Heart left ventricle (tissue), 16 donors: ENCODE measurements at regions of chr13 and their contacts with region 1.

Region 1: DNA sequence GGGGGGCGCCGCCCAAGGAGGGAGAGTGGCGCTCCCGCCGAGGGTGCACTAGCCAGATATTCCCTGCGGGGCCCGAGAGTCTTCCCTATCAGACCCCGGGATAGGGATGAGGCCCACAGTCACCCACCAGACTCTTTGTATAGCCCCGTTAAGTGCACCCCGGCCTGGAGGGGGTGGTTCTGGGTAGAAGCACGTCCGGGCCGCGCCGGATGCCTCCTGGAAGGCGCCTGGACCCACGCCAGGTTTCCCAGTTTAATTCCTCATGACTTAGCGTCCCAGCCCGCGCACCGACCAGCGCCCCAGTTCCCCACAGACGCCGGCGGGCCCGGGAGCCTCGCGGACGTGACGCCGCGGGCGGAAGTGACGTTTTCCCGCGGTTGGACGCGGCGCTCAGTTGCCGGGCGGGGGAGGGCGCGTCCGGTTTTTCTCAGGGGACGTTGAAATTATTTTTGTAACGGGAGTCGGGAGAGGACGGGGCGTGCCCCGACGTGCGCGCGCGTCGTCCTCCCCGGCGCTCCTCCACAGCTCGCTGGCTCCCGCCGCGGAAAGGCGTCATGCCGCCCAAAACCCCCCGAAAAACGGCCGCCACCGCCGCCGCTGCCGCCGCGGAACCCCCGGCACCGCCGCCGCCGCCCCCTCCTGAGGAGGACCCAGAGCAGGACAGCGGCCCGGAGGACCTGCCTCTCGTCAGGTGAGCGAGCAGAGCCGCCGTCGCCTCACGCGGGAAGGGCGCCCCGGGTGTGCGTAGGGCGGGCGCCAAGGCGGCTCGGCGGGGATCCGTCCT is at the start of gene RB1:
- DNase-seq: peak; percentile 94 to 96 (median 96)
- ATAC-seq: peak; percentile 90 to 97 (median 96)
- H3K4me3 ChIP-seq: peak within 1 kb of the TSS; percentile 76 to 99 (median 94)
- H3K27ac ChIP-seq: peak within 1 kb of the TSS; percentile 97 to 100 (median 100)
- H3K4me1 ChIP-seq: peaks cover 0 to 37% (median 27%) of the 10 kb centered on the region in 12 donors
- H3K27me3 ChIP-seq: no peaks in the 10 kb centered on the region
- CTCF ChIP-seq: no peak
- POLR2A ChIP-seq: peak; percentile 78 to 96
- total RNA-seq, gene RB1: 22.4 to 52.1 (median 28.4) TPM

Region 2: GRCh38 chr13:48094781-48095502 is 208.6 kb before region 1 on chr13 and contains the start of gene MED4:
- intact Hi-C with region 1: loop called in 2 of 10 experiments (anchors 1 to 5 kb)
- DNase-seq: peak; percentile 95 to 98 (median 96)
- ATAC-seq: peak; percentile 94 to 99 (median 98)
- H3K4me3 ChIP-seq: peak within 1 kb of the TSS; percentile 65 to 99 (median 90)
- H3K27ac ChIP-seq: peak within 1 kb of the TSS; percentile 78 to 95 (median 88)
- H3K4me1 ChIP-seq: peaks cover 0 to 47% (median 34%) of the 10 kb centered on the region in 12 donors
- H3K27me3 ChIP-seq: no peaks in the 10 kb centered on the region
- CTCF ChIP-seq: peak; percentile 98 to 100 (median 99)
- POLR2A ChIP-seq: peak in 1 of 2 donors; percentile 77
- total RNA-seq, gene MED4: 24.9 to 50.3 (median 46.0) TPM

Region 3: GRCh38 chr13:48126944-48127830 is 176.4 kb before region 1 on chr13:
- intact Hi-C with region 1: loop called in 7 of 10 experiments (anchors 1 to 10 kb)
- DNase-seq: peak; percentile 53 to 78 (median 76)
- ATAC-seq: peak; percentile 56 to 82 (median 74)
- H3K4me3 ChIP-seq: peak overlapping the region in 1 of 12 donors; percentile 6
- H3K27ac ChIP-seq: peak overlapping the region; percentile 75 to 96 (median 90)
- H3K4me1 ChIP-seq: peaks cover 0 to 51% (median 40%) of the 10 kb centered on the region in 12 donors
- H3K27me3 ChIP-seq: no peaks in the 10 kb centered on the region
- CTCF ChIP-seq: peak; percentile 60 to 86 (median 75)
- POLR2A ChIP-seq: no peak

Region 4: DNA sequence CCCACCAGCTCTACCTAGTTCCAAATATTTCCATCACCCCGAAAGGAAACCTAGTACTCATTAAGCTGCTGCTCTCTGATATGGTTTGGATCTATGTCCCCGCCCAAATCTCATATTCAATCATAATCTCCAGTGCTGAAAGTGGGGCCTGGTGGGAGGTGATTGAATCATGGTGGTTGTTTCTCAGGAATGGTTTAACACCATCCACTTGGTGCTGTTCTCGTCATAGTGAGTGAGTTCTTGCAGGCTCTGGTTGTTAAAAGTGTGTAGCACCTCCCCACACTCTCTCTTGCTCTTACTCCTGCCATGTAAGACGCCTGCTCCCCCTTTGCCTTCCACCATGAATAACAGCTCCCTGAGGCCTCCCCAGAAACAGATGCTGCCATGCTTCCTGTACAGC is 165.3 kb before region 1 on chr13:
- intact Hi-C with region 1: no loop called
- DNase-seq: no peak
- ATAC-seq: no peak
- H3K4me3 ChIP-seq: no peak overlapping the region
- H3K27ac ChIP-seq: no peak overlapping the region
- H3K4me1 ChIP-seq: peaks cover 0 to 12% (median 0%) of the 10 kb centered on the region in 12 donors
- H3K27me3 ChIP-seq: no peaks in the 10 kb centered on the region
- CTCF ChIP-seq: no peak
- POLR2A ChIP-seq: no peak

Region 5: GRCh38 chr13:48244159-48244558 is 59.4 kb before region 1 on chr13:
- intact Hi-C with region 1: loop called in 4 of 10 experiments (anchors 5 kb)
- DNase-seq: no peak
- ATAC-seq: peak in 3 of 4 donors; percentile 25 to 38 (median 31)
- H3K4me3 ChIP-seq: no peak overlapping the region
- H3K27ac ChIP-seq: peak overlapping the region in 1 of 12 donors; percentile 5
- H3K4me1 ChIP-seq: peaks cover 0 to 96% (median 69%) of the 10 kb centered on the region in 12 donors
- H3K27me3 ChIP-seq: no peaks in the 10 kb centered on the region
- CTCF ChIP-seq: no peak
- POLR2A ChIP-seq: no peak

Region 6: DNA sequence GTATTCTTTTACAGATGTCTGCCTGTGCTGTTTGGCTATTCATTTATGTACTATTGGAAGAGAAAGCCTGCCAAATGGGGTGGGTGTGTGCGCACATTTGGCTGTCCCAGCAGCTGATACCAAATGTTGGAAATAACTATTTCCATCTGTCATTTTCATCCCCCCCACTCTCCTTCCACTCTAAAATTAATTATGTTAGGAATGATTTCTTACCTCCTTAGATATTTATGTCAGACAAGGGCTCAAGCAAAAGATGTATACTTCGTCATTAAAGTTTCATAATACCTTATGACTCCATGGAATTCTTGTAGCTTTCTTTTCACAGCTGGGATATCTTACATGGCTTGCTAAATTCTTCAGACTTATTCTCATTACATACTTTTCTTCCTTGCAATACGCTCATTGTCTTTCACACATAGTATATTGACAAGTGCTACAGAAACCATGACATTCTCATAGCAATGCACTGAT is 51.9 kb before region 1 on chr13:
- intact Hi-C with region 1: loop called in 1 of 10 experiments (anchors 5 kb)
- DNase-seq: peak in 1 of 5 donors; percentile 20
- ATAC-seq: peak in 2 of 4 donors; percentile 34 to 57
- H3K4me3 ChIP-seq: peak overlapping the region in 1 of 12 donors; percentile 0
- H3K27ac ChIP-seq: peak overlapping the region in 10 of 12 donors; percentile 6 to 69 (median 21)
- H3K4me1 ChIP-seq: peaks cover 6 to 96% (median 62%) of the 10 kb centered on the region in 12 donors
- H3K27me3 ChIP-seq: no peaks in the 10 kb centered on the region
- CTCF ChIP-seq: no peak
- POLR2A ChIP-seq: no peak

Region 7: GRCh38 chr13:48370815-48371214 is 67.3 kb after region 1 on chr13:
- intact Hi-C with region 1: no loop called
- DNase-seq: no peak
- ATAC-seq: no peak
- H3K4me3 ChIP-seq: no peak overlapping the region
- H3K27ac ChIP-seq: no peak overlapping the region
- H3K4me1 ChIP-seq: no peaks in the 10 kb centered on the region
- H3K27me3 ChIP-seq: no peaks in the 10 kb centered on the region
- CTCF ChIP-seq: no peak
- POLR2A ChIP-seq: no peak

Region 8: GRCh38 chr13:48437371-48437770 is 133.8 kb after region 1 on chr13:
- intact Hi-C with region 1: no loop called
- DNase-seq: peak; percentile 77 to 82 (median 78)
- ATAC-seq: peak; percentile 80 to 98 (median 92)
- H3K4me3 ChIP-seq: peak overlapping the region in 5 of 12 donors; percentile 1 to 24 (median 2)
- H3K27ac ChIP-seq: peak overlapping the region in 11 of 12 donors; percentile 8 to 91 (median 47)
- H3K4me1 ChIP-seq: peaks cover 0 to 73% (median 25%) of the 10 kb centered on the region in 12 donors
- H3K27me3 ChIP-seq: no peaks in the 10 kb centered on the region
- CTCF ChIP-seq: no peak
- POLR2A ChIP-seq: no peak